ENCODE measurements at regions of chr1 and their contacts with region 1.

Region 1: DNA sequence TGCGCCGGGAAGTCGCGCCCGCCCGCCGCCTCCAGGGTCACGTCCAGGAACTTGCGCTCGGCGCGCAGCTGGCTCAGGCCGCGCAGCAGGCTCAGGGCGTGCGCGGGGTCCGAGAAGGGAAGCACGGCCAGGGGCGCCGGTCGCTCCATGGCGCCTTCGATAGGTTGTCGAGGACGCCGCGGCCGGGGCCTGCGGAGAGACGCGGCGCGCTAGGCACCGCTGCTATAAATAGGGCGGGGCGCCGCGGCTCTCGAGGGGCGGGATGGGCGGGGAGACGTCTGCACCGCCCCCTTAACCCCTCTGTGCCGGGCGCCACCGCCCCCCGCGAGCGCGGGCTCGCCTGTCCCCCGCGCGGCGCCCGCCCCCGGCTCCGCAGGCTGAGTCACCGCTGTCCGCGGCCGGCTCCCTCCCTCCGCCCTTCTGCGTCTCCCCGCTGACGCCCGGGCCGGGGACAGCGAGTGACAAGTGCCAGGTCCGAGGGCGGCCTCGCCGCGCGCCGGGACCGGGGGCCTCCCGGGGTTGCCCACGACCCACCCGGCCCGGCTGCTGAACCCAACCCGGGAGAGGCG is at the start of gene KLHL21:
- DNase-seq: peak; percentile 88
- H3K4me3 Mint-ChIP-seq: peak within 1 kb of the TSS; percentile 86
- H3K27ac Mint-ChIP-seq: peak within 1 kb of the TSS; percentile 98
- H3K4me1 Mint-ChIP-seq: peaks cover 33% of the 10 kb centered on the region
- H3K27me3 Mint-ChIP-seq: no peaks in the 10 kb centered on the region
- total RNA-seq, gene KLHL21: 26.7 to 27.0 TPM

Region 2: GRCh38 chr1:6489799-6490180 is 113.0 kb before region 1 on chr1:
- CTCF ChIA-PET with region 1: interaction called, 12 read pairs
- POLR2A ChIA-PET with region 1: interaction called, 13 read pairs
- DNase-seq: peak; percentile 82
- H3K4me3 Mint-ChIP-seq: peak overlapping the region; percentile 71
- H3K27ac Mint-ChIP-seq: peak overlapping the region; percentile 35
- H3K4me1 Mint-ChIP-seq: peaks cover 20% of the 10 kb centered on the region
- H3K27me3 Mint-ChIP-seq: peaks cover 13% of the 10 kb centered on the region

Region 3: DNA sequence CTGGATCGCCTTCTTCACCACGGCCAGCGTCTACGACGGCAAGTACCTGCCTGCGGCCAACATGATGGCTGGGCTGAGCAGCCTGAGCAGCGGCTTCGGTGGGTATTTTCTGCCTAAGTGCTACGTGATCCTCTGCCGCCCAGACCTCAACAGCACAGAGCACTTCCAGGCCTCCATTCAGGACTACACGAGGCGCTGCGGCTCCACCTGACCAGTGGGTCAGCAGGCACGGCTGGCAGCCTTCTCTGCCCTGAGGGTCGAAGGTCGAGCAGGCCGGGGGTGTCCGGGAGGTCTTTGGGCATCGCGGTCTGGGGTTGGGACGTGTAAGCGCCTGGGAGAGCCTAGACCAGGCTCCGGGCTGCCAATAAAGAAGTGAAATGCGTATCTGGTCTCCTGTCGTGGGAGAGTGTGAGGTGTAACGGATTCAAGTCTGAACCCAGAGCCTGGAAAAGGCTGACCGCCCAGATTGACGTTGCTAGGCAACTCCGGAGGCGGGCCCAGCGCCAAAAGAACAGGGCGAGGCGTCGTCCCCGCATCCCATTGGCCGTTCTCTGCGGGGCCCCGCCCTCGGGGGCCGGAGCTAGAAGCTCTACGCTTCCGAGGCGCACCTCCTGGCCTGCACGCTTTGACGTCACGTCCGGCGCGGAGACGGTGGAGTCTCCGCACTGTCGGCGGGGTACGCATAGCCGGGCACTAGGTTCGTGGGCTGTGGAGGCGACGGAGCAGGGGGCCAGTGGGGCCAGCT is 23.2 kb before region 1 on chr1 and contains the start of gene ZBTB48:
- CTCF ChIA-PET with region 1: interaction called, 11 read pairs
- POLR2A ChIA-PET with region 1: interaction called, 94 read pairs
- DNase-seq: peak; percentile 98
- H3K4me3 Mint-ChIP-seq: peak within 1 kb of the TSS; percentile 83
- H3K27ac Mint-ChIP-seq: peak within 1 kb of the TSS; percentile 85
- H3K4me1 Mint-ChIP-seq: peaks cover 36% of the 10 kb centered on the region
- H3K27me3 Mint-ChIP-seq: no peaks in the 10 kb centered on the region
- total RNA-seq, gene ZBTB48: 33.2 to 42.3 TPM

Region 4: DNA sequence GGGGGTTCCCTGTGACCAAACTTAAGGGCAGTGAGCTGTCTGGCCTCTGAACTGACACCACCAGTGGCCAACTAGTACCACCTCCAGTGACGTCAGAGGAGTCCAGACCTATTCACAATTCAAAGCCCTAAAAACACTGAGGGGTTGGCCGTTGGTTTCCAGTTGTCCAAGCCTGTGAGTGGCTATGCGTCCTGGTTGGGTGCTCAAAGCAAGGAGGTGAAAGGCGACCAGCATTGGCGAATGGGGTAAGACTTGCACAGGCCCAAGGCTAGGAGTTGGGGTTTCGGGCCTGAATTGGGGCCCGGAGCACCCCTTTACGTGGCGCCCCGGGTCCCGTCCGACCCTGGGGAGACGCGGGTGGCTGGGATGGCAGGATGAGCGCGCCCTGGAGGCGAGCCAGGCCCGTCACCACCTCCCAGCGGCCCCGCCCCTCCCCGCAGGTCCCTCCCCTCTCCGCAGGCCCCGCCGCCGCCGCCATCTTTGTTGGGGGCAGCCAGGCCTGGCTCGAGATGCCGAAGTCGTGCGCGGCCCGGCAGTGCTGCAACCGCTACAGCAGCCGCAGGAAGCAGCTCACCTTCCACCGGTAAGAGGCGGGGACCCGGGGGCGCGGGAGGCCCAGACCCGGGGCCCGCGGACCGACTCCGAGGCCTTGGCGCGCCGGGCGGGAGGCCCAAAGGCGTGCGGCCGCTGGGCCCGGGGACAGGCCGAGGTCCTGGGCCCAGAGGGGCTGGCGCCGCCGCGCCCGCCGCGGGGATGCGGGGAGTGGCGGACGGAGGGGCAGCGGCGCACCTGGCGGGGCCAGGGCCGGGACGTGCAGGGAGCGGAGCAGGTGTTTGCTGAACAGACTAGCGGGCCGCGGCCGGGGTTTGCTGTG is 22.2 kb after region 1 on chr1 and contains the start of gene THAP3:
- CTCF ChIA-PET with region 1: interaction called, 6 read pairs
- POLR2A ChIA-PET with region 1: interaction called, 23 read pairs
- DNase-seq: peak; percentile 90
- H3K4me3 Mint-ChIP-seq: peak within 1 kb of the TSS; percentile 87
- H3K27ac Mint-ChIP-seq: peak within 1 kb of the TSS; percentile 81
- H3K4me1 Mint-ChIP-seq: peaks cover 33% of the 10 kb centered on the region
- H3K27me3 Mint-ChIP-seq: no peaks in the 10 kb centered on the region
- total RNA-seq, gene THAP3: 23.7 to 24.1 TPM